Ascending aorta (tissue), 2 donors: ENCODE measurements at regions of chr9 and their contacts with region 1.

Region 1: DNA sequence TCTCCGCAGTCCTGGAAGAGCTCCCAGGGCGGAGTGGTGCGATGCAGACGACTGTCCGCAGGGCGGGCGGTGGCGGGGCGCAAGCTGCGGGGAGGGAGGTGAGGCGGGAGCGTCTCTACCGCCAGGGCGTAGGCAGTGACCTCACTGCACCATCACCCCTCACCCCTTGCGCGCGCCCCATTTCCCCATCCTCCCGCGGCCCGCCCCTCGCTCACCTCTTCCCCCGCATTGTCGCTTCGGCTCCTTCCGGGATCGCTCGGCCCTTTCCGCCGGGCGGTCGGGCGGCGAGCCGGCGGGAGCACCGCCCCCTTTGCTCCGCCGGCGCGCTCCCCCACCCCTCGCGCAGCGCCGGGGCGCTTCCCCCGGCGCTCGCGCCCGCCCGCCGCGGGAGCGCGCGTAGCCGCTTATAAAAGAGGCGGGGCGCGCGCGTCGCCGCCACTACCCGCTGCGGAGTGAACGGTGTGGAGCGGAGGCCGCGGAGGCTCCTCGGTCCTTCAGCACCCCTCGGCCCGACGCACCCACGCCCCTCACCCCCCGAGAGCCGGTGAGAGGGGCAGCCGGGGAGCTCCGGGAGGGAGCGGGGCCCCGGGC is at the start of gene SPTAN1:
- DNase-seq: peak; percentile 64 to 93
- H3K4me3 ChIP-seq: peak within 1 kb of the TSS; percentile 94 to 96
- H3K27ac ChIP-seq: peak within 1 kb of the TSS; percentile 96 to 98
- H3K4me1 ChIP-seq: peaks cover 5 to 43% of the 10 kb centered on the region in 2 donors
- H3K27me3 ChIP-seq: no peaks in the 10 kb centered on the region
- CTCF ChIP-seq: peak in 2 of 3 experiments; percentile 6 to 7
- total RNA-seq, gene SPTAN1: 687 TPM

Region 2: DNA sequence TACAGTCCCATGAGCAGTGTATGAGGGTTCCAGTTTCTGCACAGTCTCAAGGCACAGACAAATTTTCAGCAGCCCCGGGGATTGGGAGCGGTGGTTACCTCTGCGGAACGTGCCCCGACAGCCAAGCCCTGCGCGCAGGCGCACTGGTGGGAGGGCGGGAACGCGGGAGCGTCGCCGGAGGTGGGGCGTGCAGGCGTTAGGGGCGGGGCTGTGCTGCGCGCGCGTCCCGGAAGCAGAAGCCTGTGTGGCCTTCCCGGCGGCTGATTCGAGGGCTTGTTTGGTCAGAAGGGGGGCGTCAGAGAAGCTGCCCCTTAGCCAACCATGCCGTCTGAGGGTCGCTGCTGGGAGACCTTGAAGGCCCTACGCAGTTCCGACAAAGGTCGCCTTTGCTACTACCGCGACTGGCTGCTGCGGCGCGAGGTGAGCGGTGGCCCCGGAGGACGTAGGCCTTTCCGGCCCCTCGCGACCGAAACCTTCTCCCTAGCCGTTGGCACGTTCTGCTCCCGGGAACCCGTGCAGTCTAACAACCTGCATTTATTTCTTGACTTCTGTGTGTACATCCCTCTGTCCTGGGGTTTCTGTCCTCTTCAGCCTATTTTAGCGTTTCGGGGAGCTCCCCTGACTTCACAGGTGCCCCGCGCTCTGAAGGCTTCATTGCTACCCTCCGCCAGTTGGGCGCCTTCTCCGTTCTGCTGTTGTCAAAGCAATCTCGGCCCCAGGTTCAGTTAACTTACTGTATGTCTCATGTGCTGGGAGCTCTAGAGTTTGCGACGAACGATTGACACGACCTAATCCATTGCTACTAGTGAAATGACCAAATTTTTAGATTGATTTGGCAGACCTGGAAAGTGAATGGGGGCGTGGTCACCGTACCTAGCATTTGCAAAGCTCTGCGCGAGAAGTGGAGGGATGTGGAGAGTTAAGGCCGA is 47.5 kb before region 1 on chr9 and contains the start of gene GLE1:
- intact Hi-C with region 1: loop called (anchors 1 kb)
- DNase-seq: peak; percentile 62 to 97
- H3K4me3 ChIP-seq: peak within 1 kb of the TSS; percentile 82 to 90
- H3K27ac ChIP-seq: peak within 1 kb of the TSS; percentile 66 to 82
- H3K4me1 ChIP-seq: peaks cover 3 to 23% of the 10 kb centered on the region in 2 donors
- H3K27me3 ChIP-seq: no peaks in the 10 kb centered on the region
- CTCF ChIP-seq: no peak
- total RNA-seq, gene GLE1: 6.3 TPM

Region 3: GRCh38 chr9:128607642-128608350 is 55.5 kb after region 1 on chr9:
- intact Hi-C with region 1: loop called (anchors 1 kb)
- DNase-seq: peak; percentile 85 to 96
- H3K4me3 ChIP-seq: no peak overlapping the region
- H3K27ac ChIP-seq: peak overlapping the region; percentile 71 to 75
- H3K4me1 ChIP-seq: peaks cover 2 to 11% of the 10 kb centered on the region in 2 donors
- H3K27me3 ChIP-seq: no peaks in the 10 kb centered on the region
- CTCF ChIP-seq: peak in 1 of 3 experiments; percentile 20

Region 4: GRCh38 chr9:128656416-128657343 is 104.4 kb after region 1 on chr9 and contains the start of gene DYNC2I2:
- intact Hi-C with region 1: loop called (anchors 2 kb)
- DNase-seq: peak; percentile 76 to 96
- H3K4me3 ChIP-seq: peak within 1 kb of the TSS; percentile 78 to 84
- H3K27ac ChIP-seq: peak within 1 kb of the TSS; percentile 91 to 96
- H3K4me1 ChIP-seq: peaks cover 0 to 4% of the 10 kb centered on the region in 2 donors
- H3K27me3 ChIP-seq: no peaks in the 10 kb centered on the region
- CTCF ChIP-seq: no peak
- total RNA-seq, gene DYNC2I2: 49.9 TPM

Region 5: GRCh38 chr9:128684279-128685021 is 132.2 kb after region 1 on chr9:
- intact Hi-C with region 1: no loop called
- DNase-seq: peak in 1 of 2 donors; percentile 81
- H3K4me3 ChIP-seq: peak overlapping the region; percentile 56 to 65
- H3K27ac ChIP-seq: peak overlapping the region; percentile 41 to 51
- H3K4me1 ChIP-seq: peaks cover 3 to 11% of the 10 kb centered on the region in 2 donors
- H3K27me3 ChIP-seq: no peaks in the 10 kb centered on the region
- CTCF ChIP-seq: no peak

Region 6: DNA sequence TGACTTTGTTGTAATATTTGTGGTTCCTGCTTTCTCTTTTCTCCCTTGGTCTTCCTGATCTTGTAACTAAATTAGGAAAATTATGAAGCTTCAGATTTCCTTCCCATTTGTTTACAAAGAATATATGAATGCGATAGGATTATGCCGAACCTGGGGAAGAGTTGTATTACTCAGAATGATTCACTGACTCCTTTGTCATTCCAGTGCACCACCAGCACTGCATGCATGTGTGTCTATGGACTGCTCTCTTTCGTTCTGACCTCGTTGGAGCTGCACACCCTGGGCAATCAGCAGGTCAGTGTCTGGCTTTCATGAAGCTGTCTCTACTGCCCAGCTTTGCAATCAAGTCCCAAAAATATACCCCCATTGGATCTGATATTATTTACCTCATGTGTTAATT is 420.7 kb after region 1 on chr9:
- intact Hi-C with region 1: no loop called
- DNase-seq: no peak
- H3K4me3 ChIP-seq: no peak overlapping the region
- H3K27ac ChIP-seq: no peak overlapping the region
- H3K4me1 ChIP-seq: no peaks in the 10 kb centered on the region
- H3K27me3 ChIP-seq: no peaks in the 10 kb centered on the region
- CTCF ChIP-seq: no peak